AG04449 (cell line): ENCODE measurements at regions of chr5 and their contacts with region 1.

Region 1: DNA sequence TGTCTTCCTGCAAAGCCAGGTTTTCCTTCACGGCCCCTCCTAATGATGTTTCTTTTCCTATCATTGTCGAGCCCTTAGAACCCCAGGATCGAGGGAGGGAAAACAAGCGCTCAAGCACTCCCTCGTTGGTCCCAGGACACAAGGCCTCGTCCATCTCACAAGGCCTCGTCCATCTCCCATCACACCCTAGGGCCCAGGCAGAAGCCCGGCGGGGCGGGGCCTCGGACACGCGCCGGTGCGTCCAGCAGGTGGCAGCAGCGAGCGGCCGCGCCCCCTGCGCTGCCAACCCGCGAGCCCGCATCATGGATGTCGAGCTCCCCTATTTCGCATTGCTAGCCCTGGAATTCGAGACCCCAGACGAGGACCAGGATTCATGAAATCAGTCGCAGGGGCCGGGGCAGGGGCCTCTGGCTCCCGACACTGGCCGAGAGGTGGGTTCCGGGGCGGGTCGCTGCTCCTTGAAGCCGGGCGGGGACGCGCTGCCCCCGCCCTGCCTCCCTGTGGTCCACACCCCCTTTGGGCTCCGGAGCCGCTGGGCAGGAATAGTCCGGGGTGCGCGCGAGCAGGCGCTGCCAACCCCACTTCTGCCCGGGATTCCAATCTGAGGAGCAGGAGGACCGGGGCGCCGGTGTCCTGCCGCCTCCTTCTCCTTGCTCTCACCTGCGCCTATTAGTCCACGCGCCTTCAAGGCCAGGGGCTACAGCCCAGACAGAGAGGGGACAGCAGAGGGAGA is at the start of gene ABLIM3:
- DNase-seq: no peak
- H3K4me3 ChIP-seq: peak within 1 kb of the TSS; percentile 74
- CTCF ChIP-seq: peak; percentile 86

Region 2: GRCh38 chr5:149162401-149163084 is 21.2 kb after region 1 on chr5:
- CTCF ChIA-PET with region 1: interaction called, 150 read pairs
- POLR2A ChIA-PET with region 1: no interaction called
- DNase-seq: no peak
- H3K4me3 ChIP-seq: no peak overlapping the region
- CTCF ChIP-seq: no peak

Region 3: DNA sequence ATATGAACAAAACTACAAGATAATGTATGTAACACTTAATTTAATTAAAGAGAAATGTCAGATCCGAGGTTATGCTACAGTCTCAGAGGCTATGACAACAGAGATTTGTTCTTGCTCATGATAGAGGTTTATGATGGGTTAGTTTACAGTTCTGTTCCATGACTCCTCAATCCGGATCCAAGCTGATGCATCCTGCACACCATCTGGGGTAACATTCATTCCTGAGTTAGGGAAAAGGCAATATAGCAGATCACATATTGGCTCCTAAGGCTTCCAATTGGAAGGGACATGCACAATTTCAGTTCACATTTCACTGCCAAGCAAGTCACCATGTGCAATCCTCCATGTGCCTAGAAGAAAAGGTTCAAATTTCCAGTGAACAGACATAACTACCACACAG is 40.3 kb after region 1 on chr5:
- CTCF ChIA-PET with region 1: interaction called, 19 read pairs
- POLR2A ChIA-PET with region 1: no interaction called
- DNase-seq: no peak
- H3K4me3 ChIP-seq: no peak overlapping the region
- CTCF ChIP-seq: no peak

Region 4: DNA sequence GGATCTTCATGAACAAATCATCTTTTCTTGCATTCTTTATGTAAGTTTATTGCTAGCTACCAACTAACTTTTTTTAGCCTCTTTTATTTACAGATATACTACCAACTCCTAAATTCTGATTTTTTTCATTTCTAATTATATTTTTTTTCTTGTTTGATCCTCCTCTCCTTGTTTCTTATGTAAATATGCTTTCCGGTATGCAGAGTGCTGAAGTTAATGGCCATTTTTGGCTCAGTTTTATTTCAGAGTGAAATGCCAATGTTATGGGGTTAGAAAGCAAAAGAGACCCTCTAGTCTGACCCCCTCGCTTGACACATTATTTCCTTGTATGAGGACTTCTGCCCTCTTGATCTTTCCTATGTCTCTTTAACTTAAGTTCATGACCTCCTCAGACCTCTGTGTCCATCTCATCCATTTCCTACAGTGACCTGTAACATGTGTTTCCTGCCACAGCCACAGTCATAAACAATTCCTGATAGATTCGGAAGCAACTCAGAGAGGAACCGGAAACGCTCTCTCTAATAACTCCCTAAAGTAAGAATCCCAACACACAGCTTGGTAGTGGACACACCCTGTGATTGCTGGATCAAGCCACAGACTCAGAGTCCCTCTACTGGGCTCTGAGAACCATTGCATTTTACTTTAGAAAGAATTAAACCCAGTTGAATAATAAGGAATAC is 87.4 kb after region 1 on chr5:
- CTCF ChIA-PET with region 1: interaction called, 249 read pairs
- POLR2A ChIA-PET with region 1: no interaction called
- DNase-seq: peak; percentile 55
- H3K4me3 ChIP-seq: no peak overlapping the region
- CTCF ChIP-seq: peak; percentile 67

Region 5: GRCh38 chr5:149268928-149269557 is 127.7 kb after region 1 on chr5:
- CTCF ChIA-PET with region 1: interaction called, 25 read pairs
- POLR2A ChIA-PET with region 1: no interaction called
- DNase-seq: no peak
- H3K4me3 ChIP-seq: no peak overlapping the region
- CTCF ChIP-seq: peak; percentile 36